ENCODE measurements at regions of chr15 and their contacts with region 1.

Region 1: DNA sequence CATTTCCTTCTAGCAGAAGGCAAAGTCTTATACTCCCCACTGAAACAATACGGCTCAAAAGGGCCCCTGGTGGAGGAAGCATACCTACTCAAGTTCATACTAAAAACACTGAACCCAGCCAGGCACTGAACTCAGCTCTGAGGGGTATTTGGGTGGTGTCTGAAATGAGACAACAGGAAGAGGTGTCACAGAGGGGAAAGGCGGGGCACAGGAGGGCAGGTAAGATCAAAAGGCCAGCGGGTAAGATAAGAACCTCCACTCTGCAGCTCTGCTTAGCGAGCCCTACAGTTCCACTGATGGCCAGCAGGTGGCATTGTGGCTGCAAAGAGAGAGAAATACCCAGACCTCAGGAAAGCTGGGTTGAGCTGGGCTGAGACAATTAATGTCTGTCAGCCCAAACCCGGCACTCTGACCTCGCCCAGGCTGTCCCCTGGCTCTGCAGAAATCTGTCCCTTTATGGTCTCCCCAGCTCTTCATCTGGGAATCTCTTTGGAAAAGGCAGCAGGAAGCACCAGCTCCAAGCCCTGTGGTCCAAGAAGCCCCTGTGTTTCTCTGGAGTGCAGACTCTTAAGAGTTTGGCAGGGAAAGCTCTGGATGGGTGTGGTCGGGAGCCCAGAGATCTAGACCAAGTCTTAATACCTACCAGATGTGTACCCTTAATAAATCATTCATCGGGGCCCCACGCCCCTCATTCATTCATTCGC is 8.4 kb downstream of the MFGE8 start:
- DNase-seq: peak; percentile 89
- H3K4me3 Mint-ChIP-seq: no peak overlapping the region
- H3K27ac Mint-ChIP-seq: no peak overlapping the region
- H3K4me1 Mint-ChIP-seq: peaks cover 23% of the 10 kb centered on the region
- H3K27me3 Mint-ChIP-seq: no peaks in the 10 kb centered on the region
- CTCF ChIP-seq: peak; percentile 99

Region 2: GRCh38 chr15:88126695-88127431 is 777.9 kb before region 1 on chr15:
- CTCF ChIA-PET with region 1: no interaction called
- intact Hi-C with region 1: no loop called
- DNase-seq: no peak
- H3K4me3 Mint-ChIP-seq: no peak overlapping the region
- H3K27ac Mint-ChIP-seq: no peak overlapping the region
- H3K4me1 Mint-ChIP-seq: no peaks in the 10 kb centered on the region
- H3K27me3 Mint-ChIP-seq: peaks cover 22% of the 10 kb centered on the region
- CTCF ChIP-seq: no peak

Region 3: GRCh38 chr15:88918738-88919137 is 14.0 kb after region 1 on chr15:
- CTCF ChIA-PET with region 1: interaction called, 11 read pairs
- intact Hi-C with region 1: no loop called
- DNase-seq: peak; percentile 82
- H3K4me3 Mint-ChIP-seq: peak overlapping the region; percentile 3
- H3K27ac Mint-ChIP-seq: peak overlapping the region; percentile 85
- H3K4me1 Mint-ChIP-seq: peaks cover 20% of the 10 kb centered on the region
- H3K27me3 Mint-ChIP-seq: peaks cover 14% of the 10 kb centered on the region
- CTCF ChIP-seq: no peak

Region 4: DNA sequence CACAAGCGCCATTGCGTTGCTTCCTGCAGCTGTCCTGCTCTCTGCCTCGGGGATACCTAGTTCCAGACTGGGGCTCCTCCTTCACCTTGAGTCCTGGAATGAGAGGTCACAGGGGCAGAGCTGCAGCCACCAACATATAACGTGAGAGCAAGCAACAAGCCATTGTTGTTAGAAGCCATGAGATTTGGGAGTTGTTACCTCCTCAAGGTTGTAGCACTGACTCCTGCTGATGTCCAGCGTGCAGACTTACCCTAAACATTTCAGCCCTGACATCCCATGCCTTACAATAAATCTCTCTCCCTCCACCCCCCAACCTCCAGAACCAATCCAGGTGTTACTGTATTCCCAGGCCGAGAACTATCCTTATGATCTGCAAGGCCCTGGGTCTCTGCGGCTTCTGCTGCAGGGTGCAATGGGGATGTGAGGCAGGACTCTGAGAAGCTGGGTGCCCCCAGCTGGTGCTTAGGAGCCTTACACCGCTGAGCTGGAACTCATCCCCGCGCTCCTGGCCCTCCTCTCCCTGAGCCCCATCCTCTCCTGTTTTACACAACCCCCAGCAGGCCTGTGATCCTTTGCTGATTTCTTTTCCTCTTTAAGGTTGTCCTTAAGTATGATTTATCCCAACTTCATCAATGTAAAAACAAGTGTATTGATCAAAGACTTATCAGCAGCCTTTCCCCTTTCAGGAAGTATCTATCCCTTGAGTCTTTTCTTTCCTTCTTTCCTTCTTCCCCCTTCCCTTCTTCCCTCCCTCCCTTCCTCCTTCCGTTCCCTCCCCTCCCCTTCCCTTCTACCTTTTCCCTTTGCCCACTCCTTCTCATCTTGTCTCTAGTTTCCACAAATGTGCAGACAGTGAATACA is 99.3 kb after region 1 on chr15:
- CTCF ChIA-PET with region 1: interaction called, 13 read pairs
- intact Hi-C with region 1: no loop called
- DNase-seq: no peak
- H3K4me3 Mint-ChIP-seq: no peak overlapping the region
- H3K27ac Mint-ChIP-seq: no peak overlapping the region
- H3K4me1 Mint-ChIP-seq: no peaks in the 10 kb centered on the region
- H3K27me3 Mint-ChIP-seq: peaks cover 36% of the 10 kb centered on the region
- CTCF ChIP-seq: no peak

Region 5: DNA sequence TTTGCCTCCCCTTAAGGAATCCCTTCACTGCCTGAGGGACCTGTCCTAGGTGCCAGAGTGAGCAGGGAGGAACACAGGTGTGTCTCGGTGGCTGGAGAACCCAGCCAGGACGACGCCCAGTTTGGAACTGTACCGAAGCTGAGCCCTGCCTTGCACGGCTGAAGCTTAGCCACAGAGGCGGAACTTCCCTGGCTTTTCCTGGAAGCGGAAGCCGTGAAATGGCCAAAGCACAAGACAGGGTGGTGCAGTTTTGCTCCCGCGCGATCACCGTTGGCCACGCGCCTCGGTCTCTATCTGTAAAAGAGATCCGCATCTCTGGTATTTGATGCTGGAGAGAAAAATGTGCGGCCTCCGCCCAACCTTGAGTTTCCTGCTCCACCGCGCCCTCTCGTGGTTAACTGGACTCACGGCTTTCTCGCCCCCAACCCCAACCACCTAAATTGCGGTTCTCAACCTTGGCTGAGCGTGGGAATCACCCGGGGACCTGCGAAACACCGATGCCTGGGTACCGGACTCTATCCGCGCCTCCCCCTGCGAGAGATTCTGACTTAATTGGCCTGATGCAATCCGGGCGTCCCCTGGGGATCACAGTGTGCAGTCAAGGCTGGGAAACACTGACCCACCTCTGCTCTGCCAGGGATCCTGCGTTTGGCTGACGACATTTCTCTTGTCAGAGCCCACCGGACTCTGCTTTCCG is 112.7 kb after region 1 on chr15:
- CTCF ChIA-PET with region 1: interaction called, 43 read pairs
- intact Hi-C with region 1: loop called (anchors 1 kb)
- DNase-seq: peak; percentile 91
- H3K4me3 Mint-ChIP-seq: peak overlapping the region; percentile 64
- H3K27ac Mint-ChIP-seq: no peak overlapping the region
- H3K4me1 Mint-ChIP-seq: peaks cover 10% of the 10 kb centered on the region
- H3K27me3 Mint-ChIP-seq: peaks cover 13% of the 10 kb centered on the region
- CTCF ChIP-seq: peak; percentile 87

Measured in Calu3 (cell line).